Vagina (tissue), 2 donors: ENCODE measurements at regions of chr19 and their contacts with region 1.

Region 1: DNA sequence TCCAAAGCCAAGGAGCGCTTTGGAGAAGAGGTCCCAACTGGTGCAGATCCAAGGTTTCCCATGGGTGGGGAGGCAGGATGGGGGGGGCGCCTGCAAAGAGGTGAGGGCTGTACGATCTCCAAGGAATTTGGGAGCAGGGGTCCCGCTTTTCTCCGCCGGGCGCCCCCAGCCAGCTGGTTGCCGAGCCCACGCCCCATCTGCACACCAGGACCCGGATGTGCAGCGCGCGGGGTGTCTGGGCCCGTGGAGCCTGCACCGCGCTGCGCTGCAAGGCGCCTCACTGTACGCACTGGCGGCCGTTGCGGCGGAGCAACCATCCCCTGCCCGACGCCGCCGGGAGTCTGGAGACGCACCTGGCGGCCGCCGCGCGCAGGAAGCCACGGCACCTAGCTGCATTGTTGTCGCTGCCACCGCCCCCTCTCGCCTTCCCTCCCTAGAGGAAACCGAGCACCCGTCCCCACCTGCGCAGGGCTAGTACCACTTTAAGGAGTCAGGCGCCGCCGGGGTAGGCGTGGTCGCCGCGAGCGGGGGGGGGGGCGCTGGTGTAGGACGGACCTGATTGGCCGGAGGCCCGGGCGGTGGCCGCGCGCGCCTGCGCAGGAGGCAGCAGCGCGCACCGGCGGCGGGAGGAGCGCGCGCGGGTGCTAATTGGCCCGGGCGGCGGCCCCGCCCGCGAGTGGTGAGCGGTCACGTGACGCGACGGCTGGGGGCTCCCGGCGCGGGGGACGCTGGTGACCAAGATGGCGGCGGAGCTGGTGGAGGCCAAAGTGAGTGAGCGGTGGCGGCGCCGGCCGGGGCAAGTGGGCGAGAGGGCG is at the start of gene PIAS4:
- DNase-seq: peak in 1 of 2 donors; percentile 95
- H3K4me3 ChIP-seq: peak within 1 kb of the TSS; percentile 92 to 96
- H3K27ac ChIP-seq: peak within 1 kb of the TSS; percentile 93
- H3K4me1 ChIP-seq: peaks cover 44% of the 10 kb centered on the region
- H3K27me3 ChIP-seq: no peaks in the 10 kb centered on the region
- CTCF ChIP-seq: no peak
- POLR2A ChIP-seq: no peak
- total RNA-seq, gene PIAS4: 14.0 TPM

Region 2: GRCh38 chr19:4065430-4066175 is 58.4 kb after region 1 on chr19:
- intact Hi-C with region 1: loop called (anchors 5 kb)
- DNase-seq: peak in 1 of 2 donors; percentile 98
- H3K4me3 ChIP-seq: peak overlapping the region; percentile 99 to 100
- H3K27ac ChIP-seq: peak overlapping the region; percentile 100
- H3K4me1 ChIP-seq: peaks cover 56% of the 10 kb centered on the region
- H3K27me3 ChIP-seq: no peaks in the 10 kb centered on the region
- CTCF ChIP-seq: no peak
- POLR2A ChIP-seq: no peak

Region 3: DNA sequence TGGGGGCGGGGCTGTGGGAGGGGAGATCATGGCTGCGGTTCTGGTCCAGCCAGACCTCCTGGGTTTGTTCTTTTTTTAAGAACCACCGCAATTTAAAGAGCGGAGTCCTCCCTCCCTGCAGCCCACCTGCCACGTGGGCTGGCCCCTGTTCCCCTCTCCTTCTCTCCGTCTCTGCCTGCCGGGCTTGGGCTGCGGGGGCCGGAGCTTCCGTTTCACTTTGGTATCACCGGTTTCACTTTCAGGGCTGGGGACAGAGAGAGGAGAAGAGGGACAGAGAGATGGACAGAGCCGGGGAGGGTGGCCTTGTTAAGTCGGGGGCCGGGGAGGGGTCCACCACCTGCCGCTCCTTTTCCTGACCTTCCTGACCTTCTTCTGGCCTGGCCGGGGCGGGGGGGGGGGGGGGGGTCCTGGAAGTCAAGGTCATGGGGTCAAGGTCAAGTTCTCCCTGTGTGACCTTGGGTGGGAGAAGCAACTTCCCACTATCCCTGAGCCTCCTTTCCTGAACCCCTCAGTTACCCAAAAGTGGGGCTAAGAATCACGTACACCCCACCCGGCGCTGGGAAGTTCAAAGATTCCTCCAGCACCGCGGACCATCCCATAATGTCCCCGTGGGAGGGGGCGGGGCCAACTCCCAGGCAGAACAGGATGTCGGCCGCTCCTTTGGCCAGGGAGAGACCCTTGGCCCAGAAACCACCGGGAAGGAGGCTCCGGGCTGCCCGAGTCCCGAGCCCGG is 70.8 kb after region 1 on chr19:
- intact Hi-C with region 1: no loop called
- DNase-seq: no peak
- H3K4me3 ChIP-seq: peak overlapping the region; percentile 53
- H3K27ac ChIP-seq: peak overlapping the region; percentile 77
- H3K4me1 ChIP-seq: peaks cover 12% of the 10 kb centered on the region
- H3K27me3 ChIP-seq: no peaks in the 10 kb centered on the region
- CTCF ChIP-seq: no peak
- POLR2A ChIP-seq: no peak

Region 4: GRCh38 chr19:4123615-4124568 is 116.7 kb after region 1 on chr19 and contains the start of gene MAP2K2:
- intact Hi-C with region 1: loop called (anchors 1 kb)
- DNase-seq: peak in 1 of 2 donors; percentile 91
- H3K4me3 ChIP-seq: peak within 1 kb of the TSS; percentile 92 to 95
- H3K27ac ChIP-seq: peak within 1 kb of the TSS; percentile 81
- H3K4me1 ChIP-seq: peaks cover 45% of the 10 kb centered on the region
- H3K27me3 ChIP-seq: no peaks in the 10 kb centered on the region
- CTCF ChIP-seq: no peak
- POLR2A ChIP-seq: peak in 1 of 2 donors; percentile 46
- total RNA-seq, gene MAP2K2: 104 TPM